CD8-positive, alpha-beta memory T cell (primary cell): ENCODE measurements at regions of chr4 and their contacts with region 1.

Region 1: GRCh38 chr4:4430492-4431197 is 43.7 kb downstream of the NSG1 start:
- DNase-seq: peak; percentile 26 to 75 (median 35)
- H3K4me3 ChIP-seq: no peak overlapping the region
- H3K4me3 Mint-ChIP-seq: no peak overlapping the region
- H3K27ac ChIP-seq: no peak overlapping the region
- H3K27ac Mint-ChIP-seq: peak overlapping the region in 3 of 8 donors; percentile 2 to 54 (median 25)
- H3K4me1 ChIP-seq: no peaks in the 10 kb centered on the region
- H3K4me1 Mint-ChIP-seq: peaks cover 6 to 8% (median 7%) of the 10 kb centered on the region in 3 donors
- H3K27me3 ChIP-seq: no peaks in the 10 kb centered on the region
- H3K27me3 Mint-ChIP-seq: no peaks in the 10 kb centered on the region

Region 2: DNA sequence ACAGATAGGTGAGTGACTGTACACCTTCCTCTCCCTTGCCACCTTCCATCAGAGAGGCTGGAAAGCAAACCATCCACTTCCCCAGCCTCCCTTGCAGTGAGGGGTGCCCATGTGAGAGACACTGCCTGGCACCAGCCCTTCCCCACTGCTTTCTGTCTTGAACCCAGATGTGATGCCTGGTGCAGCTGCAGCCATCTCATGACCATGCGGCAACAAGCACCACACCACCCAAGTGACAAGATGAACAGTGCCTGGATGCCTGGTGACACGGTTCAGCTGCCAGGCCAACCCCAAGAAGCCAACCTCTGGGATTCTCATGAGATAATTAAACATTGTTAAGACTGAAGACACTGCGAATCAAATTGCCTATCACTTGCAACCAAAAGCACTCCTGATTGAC is 235.3 kb before region 1 on chr4:
- CTCF ChIA-PET with region 1: no interaction called
- POLR2A ChIA-PET with region 1: no interaction called
- DNase-seq: no peak
- H3K4me3 ChIP-seq: no peak overlapping the region
- H3K4me3 Mint-ChIP-seq: no peak overlapping the region
- H3K27ac ChIP-seq: no peak overlapping the region
- H3K27ac Mint-ChIP-seq: peak overlapping the region in 1 of 8 donors; percentile 20
- H3K4me1 ChIP-seq: no peaks in the 10 kb centered on the region
- H3K4me1 Mint-ChIP-seq: peaks cover 0 to 3% (median 0%) of the 10 kb centered on the region in 3 donors
- H3K27me3 ChIP-seq: no peaks in the 10 kb centered on the region
- H3K27me3 Mint-ChIP-seq: peaks cover 28 to 56% of the 10 kb centered on the region in 2 donors

Region 3: GRCh38 chr4:4418676-4419390 is 11.8 kb before region 1 on chr4:
- CTCF ChIA-PET with region 1: interaction called, 10 read pairs
- POLR2A ChIA-PET with region 1: no interaction called
- DNase-seq: no peak
- H3K4me3 ChIP-seq: no peak overlapping the region
- H3K4me3 Mint-ChIP-seq: peak overlapping the region in 5 of 7 donors; percentile 32 to 66 (median 39)
- H3K27ac ChIP-seq: no peak overlapping the region
- H3K27ac Mint-ChIP-seq: peak overlapping the region in 7 of 8 donors; percentile 40 to 89 (median 73)
- H3K4me1 ChIP-seq: peaks cover 19% of the 10 kb centered on the region
- H3K4me1 Mint-ChIP-seq: peaks cover 20 to 36% (median 34%) of the 10 kb centered on the region in 3 donors
- H3K27me3 ChIP-seq: no peaks in the 10 kb centered on the region
- H3K27me3 Mint-ChIP-seq: no peaks in the 10 kb centered on the region

Region 4: GRCh38 chr4:4541661-4542570 is 111.3 kb after region 1 on chr4 and contains the start of gene STX18:
- CTCF ChIA-PET with region 1: no interaction called
- POLR2A ChIA-PET with region 1: no interaction called
- DNase-seq: peak; percentile 77 to 88 (median 81)
- H3K4me3 ChIP-seq: peak within 1 kb of the TSS; percentile 94
- H3K4me3 Mint-ChIP-seq: peak within 1 kb of the TSS; percentile 94 to 100 (median 97)
- H3K27ac ChIP-seq: peak within 1 kb of the TSS; percentile 79
- H3K27ac Mint-ChIP-seq: peak within 1 kb of the TSS; percentile 94 to 99 (median 96)
- H3K4me1 ChIP-seq: peaks cover 32% of the 10 kb centered on the region
- H3K4me1 Mint-ChIP-seq: peaks cover 56 to 74% (median 68%) of the 10 kb centered on the region in 3 donors
- H3K27me3 ChIP-seq: no peaks in the 10 kb centered on the region
- H3K27me3 Mint-ChIP-seq: no peaks in the 10 kb centered on the region
- total RNA-seq, gene STX18: 25.2 to 27.1 TPM